T-cell (primary cell): ENCODE measurements at regions of chr15 and their contacts with region 1.

Region 1: DNA sequence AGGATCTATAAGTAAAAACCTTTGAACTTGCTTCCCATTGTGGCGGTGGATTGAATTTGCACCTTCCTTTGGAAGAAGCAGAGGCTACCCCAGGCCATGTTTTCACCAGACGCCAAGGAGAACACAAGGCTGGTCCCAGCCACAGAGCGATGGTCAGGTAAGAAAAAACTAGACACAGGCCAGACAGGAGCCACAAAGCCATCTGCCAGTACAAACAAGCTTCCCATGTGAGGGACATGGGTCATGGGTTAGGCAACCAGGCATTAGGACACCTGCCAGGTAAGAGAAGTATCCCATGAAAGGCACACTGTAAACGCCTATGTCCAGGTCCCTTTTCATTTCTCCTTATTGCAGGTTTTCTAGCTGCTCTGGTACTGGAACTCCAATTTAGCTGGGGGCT is 190.2 kb downstream of the KLF13 start:
- DNase-seq: no peak
- ATAC-seq: no peak
- H3K4me3 ChIP-seq: no peak overlapping the region
- H3K4me3 Mint-ChIP-seq: no peak overlapping the region
- H3K27ac ChIP-seq: no peak overlapping the region
- H3K27ac Mint-ChIP-seq: no peak overlapping the region
- H3K4me1 ChIP-seq: peaks cover 4 to 8% of the 10 kb centered on the region in 2 experiments
- H3K4me1 Mint-ChIP-seq: peaks cover 12 to 27% (median 19%) of the 10 kb centered on the region in 3 donors
- H3K27me3 ChIP-seq: peaks cover 0 to 27% of the 10 kb centered on the region in 2 experiments
- H3K27me3 Mint-ChIP-seq: peaks cover 10 to 12% of the 10 kb centered on the region in 2 donors

Region 2: GRCh38 chr15:31228011-31228484 is 288.8 kb before region 1 on chr15:
- CTCF ChIA-PET with region 1: interaction called in 1 of 2 experiments, 11 read pairs
- POLR2A ChIA-PET with region 1: no interaction called
- DNase-seq: no peak
- ATAC-seq: no peak
- H3K4me3 ChIP-seq: no peak overlapping the region
- H3K4me3 Mint-ChIP-seq: no peak overlapping the region
- H3K27ac ChIP-seq: no peak overlapping the region
- H3K27ac Mint-ChIP-seq: peak overlapping the region in 1 of 2 donors; percentile 28
- H3K4me1 ChIP-seq: peaks cover 0 to 17% of the 10 kb centered on the region in 2 experiments
- H3K4me1 Mint-ChIP-seq: peaks cover 10 to 29% (median 16%) of the 10 kb centered on the region in 3 donors
- H3K27me3 ChIP-seq: peaks cover 0 to 10% of the 10 kb centered on the region in 2 experiments
- H3K27me3 Mint-ChIP-seq: no peaks in the 10 kb centered on the region

Region 3: GRCh38 chr15:31302778-31303725 is 213.8 kb before region 1 on chr15:
- CTCF ChIA-PET with region 1: no interaction called
- POLR2A ChIA-PET with region 1: interaction called in 1 of 2 experiments, 10 read pairs
- DNase-seq: peak in 5 of 35 experiments; percentile 16 to 44 (median 24)
- ATAC-seq: peak; percentile 27 to 76 (median 56)
- H3K4me3 ChIP-seq: no peak overlapping the region
- H3K4me3 Mint-ChIP-seq: no peak overlapping the region
- H3K27ac ChIP-seq: no peak overlapping the region
- H3K27ac Mint-ChIP-seq: peak overlapping the region in 1 of 2 donors; percentile 34
- H3K4me1 ChIP-seq: peaks cover 35 to 40% of the 10 kb centered on the region in 2 experiments
- H3K4me1 Mint-ChIP-seq: peaks cover 33 to 42% (median 35%) of the 10 kb centered on the region in 3 donors
- H3K27me3 ChIP-seq: peaks cover 0 to 30% of the 10 kb centered on the region in 2 experiments
- H3K27me3 Mint-ChIP-seq: peaks cover 0 to 4% of the 10 kb centered on the region in 2 donors